WTC11 (cell line): ENCODE measurements at regions of chr2 and their contacts with region 1.

Region 1: GRCh38 chr2:27723372-27724144 is 48.0 kb upstream of the MRPL33 start:
- DNase-seq: peak; percentile 72
- ATAC-seq: peak; percentile 88
- H3K4me3 Mint-ChIP-seq: no peak overlapping the region
- H3K27ac Mint-ChIP-seq: peak overlapping the region; percentile 49; the same call in 1 of the 2 replicates
- H3K4me1 Mint-ChIP-seq: peaks cover 21% of the 10 kb centered on the region
- H3K27me3 Mint-ChIP-seq: no peaks in the 10 kb centered on the region
- CTCF ChIP-seq: peak; percentile 66

Region 2: GRCh38 chr2:27322766-27323595 is 400.6 kb before region 1 on chr2 and contains the start of gene MPV17:
- CTCF ChIA-PET with region 1: no interaction called
- POLR2A ChIA-PET with region 1: no interaction called
- DNase-seq: peak; percentile 91
- ATAC-seq: peak; percentile 89
- H3K4me3 Mint-ChIP-seq: peak within 1 kb of the TSS; percentile 99
- H3K27ac Mint-ChIP-seq: peak within 1 kb of the TSS; percentile 94
- H3K4me1 Mint-ChIP-seq: peaks cover 11% of the 10 kb centered on the region
- H3K27me3 Mint-ChIP-seq: no peaks in the 10 kb centered on the region
- CTCF ChIP-seq: no peak
- total RNA-seq, gene MPV17: 51.5 to 60.4 TPM (median 59.3 TPM) in 3 replicates

Region 3: DNA sequence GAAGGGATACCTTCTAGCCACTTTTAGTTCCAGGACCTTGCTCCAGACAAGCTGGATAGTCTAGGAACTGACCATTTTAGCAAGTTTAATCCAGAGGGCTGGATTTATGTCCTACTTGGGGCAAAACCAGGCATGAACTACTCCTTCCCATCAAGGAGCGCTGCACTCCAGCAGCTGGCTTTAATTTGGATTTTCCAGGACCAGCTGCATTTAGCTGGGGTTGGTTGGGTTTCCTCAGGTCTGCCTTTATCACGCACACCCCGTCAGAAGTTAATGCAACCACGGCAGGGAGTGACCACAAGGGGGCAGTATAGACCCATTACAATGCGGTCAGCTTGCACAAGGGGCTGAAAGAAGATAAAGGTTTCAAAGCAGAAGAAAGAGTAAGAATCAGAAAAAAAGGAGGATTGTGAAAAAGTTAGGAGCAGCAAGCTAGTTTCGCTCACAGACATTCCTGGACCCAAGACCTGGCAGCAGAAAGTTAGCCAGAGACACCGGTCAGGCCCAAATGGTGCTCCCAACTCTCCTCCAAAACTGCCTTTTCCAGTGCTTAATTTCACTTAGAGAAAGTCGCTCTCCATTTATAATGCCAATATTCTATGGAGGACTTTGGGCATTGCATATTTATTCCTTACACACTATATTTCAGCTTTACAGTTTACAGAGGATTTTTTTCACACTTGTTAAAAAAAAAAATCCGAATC is 19.8 kb before region 1 on chr2:
- CTCF ChIA-PET with region 1: interaction called, 34 read pairs
- POLR2A ChIA-PET with region 1: interaction called, 3 read pairs
- DNase-seq: peak; percentile 92
- ATAC-seq: peak; percentile 86
- H3K4me3 Mint-ChIP-seq: no peak overlapping the region
- H3K27ac Mint-ChIP-seq: no peak overlapping the region
- H3K4me1 Mint-ChIP-seq: no peaks in the 10 kb centered on the region; the same call in 1 of the 2 replicates
- H3K27me3 Mint-ChIP-seq: no peaks in the 10 kb centered on the region
- CTCF ChIP-seq: peak; percentile 88

Region 4: DNA sequence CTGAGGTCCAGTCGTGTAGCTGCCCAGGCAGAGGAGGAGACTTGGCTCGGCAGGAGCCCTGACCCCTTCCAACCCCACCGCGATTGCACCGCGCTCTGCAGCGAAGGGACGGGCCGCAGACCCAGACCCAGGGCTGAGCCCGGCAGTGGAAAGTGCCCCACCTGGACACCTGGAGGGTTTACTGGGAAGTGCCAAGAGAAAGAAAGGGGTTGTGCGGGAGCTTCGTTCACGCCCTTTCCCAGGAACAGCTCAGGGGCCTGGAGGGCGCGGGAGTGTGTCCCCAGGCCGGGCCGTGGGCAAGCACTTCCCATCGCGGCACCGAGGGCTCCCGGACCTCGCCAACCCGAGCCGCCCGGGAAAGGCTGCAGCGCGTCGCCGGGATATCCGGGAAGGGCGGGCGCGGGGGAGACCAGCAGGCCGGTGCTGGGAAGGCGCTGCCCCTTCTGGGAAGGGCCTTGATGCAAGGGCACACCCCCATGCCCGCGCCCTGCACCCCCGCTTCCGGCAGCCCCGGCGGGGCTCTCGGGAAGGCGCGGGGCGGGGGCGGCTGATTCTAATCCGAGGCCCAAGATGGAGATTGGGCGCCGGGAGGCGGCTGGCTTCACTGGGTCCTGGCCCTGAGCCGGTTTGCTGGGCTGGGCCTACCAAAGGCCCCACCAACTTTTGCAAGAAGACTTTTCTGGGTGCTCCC is 11.8 kb after region 1 on chr2:
- CTCF ChIA-PET with region 1: interaction called, 31 read pairs
- POLR2A ChIA-PET with region 1: interaction called, 4 read pairs
- DNase-seq: peak; percentile 76
- ATAC-seq: peak; percentile 91
- H3K4me3 Mint-ChIP-seq: peak overlapping the region; percentile 78
- H3K27ac Mint-ChIP-seq: peak overlapping the region; percentile 72
- H3K4me1 Mint-ChIP-seq: peaks cover 19% of the 10 kb centered on the region
- H3K27me3 Mint-ChIP-seq: peaks cover 14% of the 10 kb centered on the region
- CTCF ChIP-seq: no peak

Region 5: GRCh38 chr2:28413142-28413898 is 689.8 kb after region 1 on chr2:
- CTCF ChIA-PET with region 1: interaction called, 16 read pairs
- POLR2A ChIA-PET with region 1: no interaction called
- DNase-seq: peak; percentile 45
- ATAC-seq: peak; percentile 78
- H3K4me3 Mint-ChIP-seq: no peak overlapping the region
- H3K27ac Mint-ChIP-seq: peak overlapping the region; percentile 25
- H3K4me1 Mint-ChIP-seq: peaks cover 20% of the 10 kb centered on the region
- H3K27me3 Mint-ChIP-seq: no peaks in the 10 kb centered on the region
- CTCF ChIP-seq: no peak